ENCODE measurements at regions of chr19 and their contacts with region 1.

Region 1: DNA sequence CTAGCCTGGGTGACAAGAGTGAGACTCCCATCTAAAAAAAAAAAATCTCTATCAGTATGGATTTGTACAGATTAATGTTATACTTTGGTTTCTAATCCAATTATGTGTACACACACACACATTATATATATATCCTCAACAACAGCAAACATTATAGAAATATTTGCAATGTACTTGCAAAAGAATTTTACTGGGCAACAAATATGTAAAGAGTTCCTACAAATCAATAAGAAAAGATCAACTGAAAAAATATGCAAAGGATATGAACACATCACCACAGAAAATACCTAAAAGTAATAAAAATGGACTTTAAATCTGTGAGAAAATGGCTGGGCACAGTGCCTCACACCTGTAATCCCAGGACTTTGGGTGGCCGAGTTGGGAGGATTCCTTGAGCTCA is 40.9 kb upstream of the NFIC start:
- DNase-seq: no peak
- ATAC-seq: no peak

Region 2: DNA sequence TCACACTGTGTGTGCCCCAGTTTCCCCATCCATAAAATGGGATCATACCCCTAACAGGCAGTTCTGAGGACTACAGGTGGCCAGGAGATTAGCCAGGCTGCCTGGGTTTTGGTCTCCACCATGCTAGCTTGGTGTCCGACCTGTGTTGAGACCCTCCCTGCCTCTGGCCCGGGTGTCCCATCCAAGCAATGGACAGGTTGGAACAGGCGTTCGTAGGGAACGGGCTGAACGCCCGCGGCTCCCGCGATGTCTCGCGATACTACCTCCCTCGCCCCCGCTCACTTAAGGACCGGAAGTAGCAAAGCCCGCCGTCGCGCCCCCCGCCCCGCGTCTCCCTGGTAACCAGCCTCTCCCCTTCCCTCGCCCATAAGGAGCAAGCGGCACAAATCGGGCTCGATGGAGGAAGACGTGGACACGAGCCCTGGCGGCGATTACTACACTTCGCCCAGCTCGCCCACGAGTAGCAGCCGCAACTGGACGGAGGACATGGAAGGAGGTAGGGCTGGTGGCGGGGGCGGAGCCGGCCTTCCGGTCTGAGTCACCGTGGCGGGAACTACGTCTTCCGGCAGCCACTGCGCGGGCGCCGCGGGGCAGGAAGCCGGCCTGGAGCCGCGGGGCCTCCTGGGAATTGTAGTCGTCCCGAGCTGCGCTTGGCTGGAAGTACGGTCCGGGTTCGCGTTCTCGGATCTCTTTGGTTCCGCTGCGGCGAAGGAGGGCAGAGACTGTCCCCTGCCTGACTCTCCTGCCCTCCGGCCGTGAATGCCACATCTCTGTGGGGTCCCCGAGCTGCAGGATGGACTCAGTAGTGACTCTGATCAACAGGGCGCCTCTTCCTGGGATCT is 109.5 kb after region 1 on chr19:
- intact Hi-C with region 1: loop called (anchors 5 kb)
- DNase-seq: peak; percentile 98
- ATAC-seq: peak; percentile 96

Region 3: DNA sequence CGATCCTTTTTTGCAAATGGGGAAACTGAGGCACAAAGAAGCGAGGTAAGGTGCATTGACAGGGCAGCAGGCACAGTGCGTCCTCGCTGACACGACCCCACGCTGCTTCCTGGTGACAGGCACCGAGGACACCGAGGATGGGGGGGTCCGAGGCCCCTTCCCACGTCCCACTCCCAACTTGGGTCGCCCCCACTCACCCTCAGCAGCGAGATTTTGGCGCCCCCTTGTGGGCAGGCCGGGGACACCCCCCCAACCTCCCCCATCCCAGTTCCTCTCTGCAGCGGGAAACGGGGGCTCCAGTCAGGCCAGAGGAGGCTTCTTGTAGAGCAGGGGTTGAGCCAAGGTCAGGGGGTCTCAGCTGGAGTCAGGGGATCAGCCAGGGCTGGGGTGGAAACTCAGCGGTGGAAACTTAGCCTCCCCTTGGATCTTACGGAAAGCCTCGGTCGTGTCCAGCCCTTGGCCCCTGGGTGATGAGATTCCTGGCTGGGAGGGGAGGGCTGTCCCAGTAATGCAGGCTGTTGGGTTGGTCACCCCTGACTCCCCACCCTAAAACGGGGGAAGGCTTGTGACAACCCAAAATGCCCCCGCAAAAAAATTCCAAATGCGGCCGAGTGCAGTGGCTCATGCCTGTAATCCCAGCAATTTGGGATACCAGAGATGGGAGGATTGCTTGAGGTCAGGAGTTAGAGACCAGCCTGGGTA is 146.7 kb after region 1 on chr19:
- intact Hi-C with region 1: loop called (anchors 5 kb)
- DNase-seq: no peak
- ATAC-seq: peak; percentile 69

Measured in Right ventricle myocardium superior (tissue), 1 donor.